Activated CD4-positive, alpha-beta memory T cell treated with anti-CD3 and anti-CD28 coated beads for 36 hours (primary cell): ENCODE measurements at regions of chr12 and their contacts with region 1.

Region 1: DNA sequence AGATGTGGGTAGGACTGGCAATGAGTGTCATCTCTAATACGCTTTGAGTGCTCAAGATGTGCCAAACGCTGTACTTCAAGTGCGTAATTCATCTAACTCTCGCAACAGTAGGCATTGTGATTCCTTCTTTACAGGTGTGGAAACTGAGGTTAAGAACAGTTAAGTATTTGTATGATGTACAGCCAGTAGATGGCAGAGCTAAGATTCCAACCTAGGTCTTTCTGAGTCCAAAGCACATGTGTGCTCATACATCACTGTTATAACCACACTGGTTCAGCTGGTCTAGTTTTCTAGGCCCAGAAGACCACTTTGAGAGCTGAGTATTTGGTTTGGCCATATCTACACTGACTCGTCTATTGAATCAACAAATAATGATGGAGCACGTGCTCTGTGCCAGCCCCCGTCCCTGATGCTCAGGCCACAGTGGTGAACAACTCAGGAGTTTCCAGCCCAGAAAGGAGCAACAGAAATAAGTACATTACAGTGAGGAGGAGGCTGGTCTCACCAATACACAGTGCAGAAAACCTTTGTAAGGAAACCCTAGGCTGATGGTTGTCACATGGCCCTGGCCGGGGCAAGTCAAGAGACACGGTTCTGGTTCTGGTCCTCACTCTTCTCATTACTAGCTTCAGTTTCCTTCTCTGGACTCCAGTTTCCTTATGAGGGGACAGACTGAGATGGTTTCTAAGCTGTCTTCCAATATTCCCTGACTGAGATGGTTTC is 69.3 kb upstream of the SCN8A start:
- DNase-seq: no peak
- H3K4me3 Mint-ChIP-seq: no peak overlapping the region
- H3K27ac Mint-ChIP-seq: no peak overlapping the region
- H3K4me1 Mint-ChIP-seq: no peaks in the 10 kb centered on the region
- H3K27me3 Mint-ChIP-seq: no peaks in the 10 kb centered on the region

Region 2: GRCh38 chr12:51488281-51488680 is 33.4 kb before region 1 on chr12:
- CTCF ChIA-PET with region 1: no interaction called
- POLR2A ChIA-PET with region 1: no interaction called
- intact Hi-C with region 1: no loop called
- DNase-seq: no peak
- H3K4me3 Mint-ChIP-seq: no peak overlapping the region
- H3K27ac Mint-ChIP-seq: no peak overlapping the region
- H3K4me1 Mint-ChIP-seq: peaks cover 13% of the 10 kb centered on the region
- H3K27me3 Mint-ChIP-seq: no peaks in the 10 kb centered on the region

Region 3: GRCh38 chr12:51531978-51532497 is 10.3 kb after region 1 on chr12:
- CTCF ChIA-PET with region 1: interaction called, 16 read pairs
- POLR2A ChIA-PET with region 1: no interaction called
- intact Hi-C with region 1: no loop called
- DNase-seq: peak; percentile 82
- H3K4me3 Mint-ChIP-seq: no peak overlapping the region
- H3K27ac Mint-ChIP-seq: no peak overlapping the region
- H3K4me1 Mint-ChIP-seq: peaks cover 7% of the 10 kb centered on the region
- H3K27me3 Mint-ChIP-seq: peaks cover 1% of the 10 kb centered on the region